BJ (cell line): ENCODE measurements at regions of chr22 and their contacts with region 1.

Region 1: GRCh38 chr22:28373831-28374230 is 305.8 kb downstream of the TTC28 start:
- DNase-seq: no peak
- H3K4me3 ChIP-seq: no peak overlapping the region; the same call in 1 of the 2 replicates
- H3K27me3 ChIP-seq: no peaks in the 10 kb centered on the region
- CTCF ChIP-seq: no peak

Region 2: GRCh38 chr22:28112548-28113043 is 261.2 kb before region 1 on chr22:
- CTCF ChIA-PET with region 1: no interaction called
- POLR2A ChIA-PET with region 1: no interaction called
- DNase-seq: no peak
- H3K4me3 ChIP-seq: no peak overlapping the region
- H3K27me3 ChIP-seq: no peaks in the 10 kb centered on the region
- CTCF ChIP-seq: peak; percentile 47

Region 3: GRCh38 chr22:28547132-28547842 is 173.5 kb after region 1 on chr22:
- CTCF ChIA-PET with region 1: no interaction called
- POLR2A ChIA-PET with region 1: interaction called, 13 read pairs
- DNase-seq: peak; percentile 93
- H3K4me3 ChIP-seq: no peak overlapping the region
- H3K27me3 ChIP-seq: no peaks in the 10 kb centered on the region
- CTCF ChIP-seq: no peak